Motor neuron (in vitro differentiated cells): ENCODE measurements at regions of chr9 and their contacts with region 1.

Region 1: DNA sequence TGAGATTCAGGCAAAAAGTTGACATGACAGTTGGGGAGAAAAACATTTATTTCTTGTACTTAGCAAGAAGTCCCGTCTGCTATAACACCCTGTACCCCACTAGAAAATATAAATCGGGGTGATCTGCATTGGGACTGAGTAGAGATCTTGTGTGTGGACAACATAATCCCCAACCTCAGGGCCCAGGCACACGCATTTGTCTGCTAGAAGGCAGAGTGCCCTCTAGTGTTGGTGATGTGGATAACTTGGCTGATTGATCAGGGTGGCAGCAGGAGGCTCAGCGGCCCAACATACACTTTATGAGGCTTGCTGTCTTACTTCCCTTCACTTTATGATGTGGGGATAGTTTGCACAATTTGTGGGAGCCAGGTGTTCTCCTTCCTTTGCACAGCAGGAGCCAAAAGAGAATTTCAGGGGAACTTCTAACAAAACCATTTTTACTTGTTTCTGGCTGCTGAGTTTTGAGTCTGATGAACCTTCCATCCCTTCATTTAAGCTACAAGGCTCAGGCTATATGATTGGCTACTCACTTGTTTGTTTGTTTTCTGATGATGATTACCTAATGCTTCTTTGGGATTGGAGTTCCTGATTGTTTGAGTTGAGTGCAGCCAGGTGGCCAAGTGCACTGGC is 263.2 kb downstream of the DMAC1 start:
- ATAC-seq: peak in 5 of 8 experiments; percentile 38 to 86 (median 64)
- H3K4me3 ChIP-seq: no peak overlapping the region
- H3K27ac ChIP-seq: no peak overlapping the region
- H3K4me1 ChIP-seq: no peaks in the 10 kb centered on the region

Region 2: GRCh38 chr9:6907772-6908381 is 628.5 kb before region 1 on chr9:
- in situ Hi-C with region 1: loop called in 1 of 9 experiments (anchors 25 kb)
- ATAC-seq: peak in 3 of 8 experiments; percentile 46 to 67 (median 53)
- H3K4me3 ChIP-seq: no peak overlapping the region
- H3K27ac ChIP-seq: no peak overlapping the region
- H3K4me1 ChIP-seq: peaks cover 0 to 3% of the 10 kb centered on the region in 2 donors

Region 3: GRCh38 chr9:7045361-7045760 is 491.1 kb before region 1 on chr9:
- in situ Hi-C with region 1: loop called in 2 of 9 experiments (anchors 25 kb)
- ATAC-seq: no peak
- H3K4me3 ChIP-seq: no peak overlapping the region
- H3K27ac ChIP-seq: no peak overlapping the region
- H3K4me1 ChIP-seq: no peaks in the 10 kb centered on the region

Region 4: GRCh38 chr9:7055201-7055903 is 481.1 kb before region 1 on chr9:
- in situ Hi-C with region 1: loop called in 1 of 9 experiments (anchors 25 kb)
- ATAC-seq: no peak
- H3K4me3 ChIP-seq: no peak overlapping the region
- H3K27ac ChIP-seq: no peak overlapping the region
- H3K4me1 ChIP-seq: peaks cover 10 to 32% of the 10 kb centered on the region in 2 donors

Region 5: GRCh38 chr9:7150153-7150890 is 386.1 kb before region 1 on chr9:
- in situ Hi-C with region 1: no loop called
- ATAC-seq: peak in 3 of 8 experiments; percentile 39 to 76 (median 46)
- H3K4me3 ChIP-seq: no peak overlapping the region
- H3K27ac ChIP-seq: no peak overlapping the region
- H3K4me1 ChIP-seq: peaks cover 0 to 13% of the 10 kb centered on the region in 2 donors

Region 6: GRCh38 chr9:7368410-7369292 is 167.8 kb before region 1 on chr9:
- in situ Hi-C with region 1: no loop called
- ATAC-seq: no peak
- H3K4me3 ChIP-seq: no peak overlapping the region
- H3K27ac ChIP-seq: no peak overlapping the region
- H3K4me1 ChIP-seq: peaks cover 0 to 3% of the 10 kb centered on the region in 2 donors

Region 7: GRCh38 chr9:7489036-7489435 is 47.4 kb before region 1 on chr9:
- in situ Hi-C with region 1: no loop called
- ATAC-seq: peak; percentile 28 to 98 (median 91)
- H3K4me3 ChIP-seq: no peak overlapping the region
- H3K27ac ChIP-seq: peak overlapping the region in 1 of 2 donors; percentile 19
- H3K4me1 ChIP-seq: peaks cover 12 to 18% of the 10 kb centered on the region in 2 donors

Region 8: DNA sequence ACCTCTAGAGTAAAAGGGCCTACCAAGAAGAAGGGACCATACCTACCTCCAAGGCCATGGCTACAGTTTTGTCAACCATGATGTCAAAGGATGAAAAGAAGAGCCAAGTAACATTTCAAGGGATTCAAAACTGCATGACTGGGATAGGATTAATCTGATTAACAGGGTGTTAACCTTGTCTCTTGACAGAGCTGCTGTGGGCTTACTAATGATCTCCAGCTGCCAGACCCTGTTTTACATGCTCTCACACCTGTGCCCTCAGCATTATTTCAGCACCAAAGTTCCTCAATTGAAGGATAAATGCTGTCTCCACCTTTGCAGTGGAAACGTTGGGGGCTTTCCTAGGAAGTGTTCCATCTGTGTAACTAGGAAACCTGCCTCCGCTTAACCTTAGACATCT is 184.9 kb after region 1 on chr9:
- in situ Hi-C with region 1: no loop called
- ATAC-seq: no peak
- H3K4me3 ChIP-seq: no peak overlapping the region
- H3K27ac ChIP-seq: no peak overlapping the region
- H3K4me1 ChIP-seq: peaks cover 0 to 2% of the 10 kb centered on the region in 2 donors